ENCODE measurements at regions of chr5 and their contacts with region 1.

Region 1: DNA sequence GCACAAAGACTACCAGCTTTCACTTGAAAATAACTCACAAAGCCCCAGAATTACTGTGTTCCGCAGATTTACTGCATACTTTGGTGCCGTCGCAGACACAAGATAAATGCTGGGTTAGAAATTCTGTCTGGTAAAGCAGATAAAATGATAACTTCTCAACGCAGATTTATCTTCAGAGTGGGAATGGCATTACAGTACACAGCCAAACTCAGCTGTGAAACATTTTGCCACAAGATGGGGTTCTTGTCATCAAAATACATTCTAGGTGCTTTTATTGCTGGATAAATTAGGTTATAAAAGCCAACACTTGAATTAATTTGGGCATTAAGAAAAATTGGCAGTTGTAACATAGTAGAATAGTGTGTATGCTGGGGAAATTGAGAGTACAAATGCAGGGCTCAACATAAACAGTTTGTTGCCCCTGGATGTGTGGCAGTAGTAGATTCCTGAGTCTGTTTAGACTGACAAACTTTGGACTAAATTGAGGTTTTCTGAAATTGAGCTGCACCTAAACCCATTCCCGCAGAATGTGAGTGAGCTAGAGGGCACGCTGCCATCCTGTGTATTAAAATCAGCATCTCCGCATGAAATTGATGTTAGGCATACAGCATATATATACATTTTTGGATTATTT is 61.1 kb downstream of the LMNB1 start:
- DNase-seq: no peak
- H3K4me3 ChIP-seq: no peak overlapping the region
- H3K27ac ChIP-seq: no peak overlapping the region
- H3K4me1 ChIP-seq: no peaks in the 10 kb centered on the region
- H3K27me3 ChIP-seq: no peaks in the 10 kb centered on the region
- CTCF ChIP-seq: peak in 2 of 3 donors; percentile 18 to 20
- EP300 ChIP-seq: no peak
- POLR2A ChIP-seq: no peak

Region 2: DNA sequence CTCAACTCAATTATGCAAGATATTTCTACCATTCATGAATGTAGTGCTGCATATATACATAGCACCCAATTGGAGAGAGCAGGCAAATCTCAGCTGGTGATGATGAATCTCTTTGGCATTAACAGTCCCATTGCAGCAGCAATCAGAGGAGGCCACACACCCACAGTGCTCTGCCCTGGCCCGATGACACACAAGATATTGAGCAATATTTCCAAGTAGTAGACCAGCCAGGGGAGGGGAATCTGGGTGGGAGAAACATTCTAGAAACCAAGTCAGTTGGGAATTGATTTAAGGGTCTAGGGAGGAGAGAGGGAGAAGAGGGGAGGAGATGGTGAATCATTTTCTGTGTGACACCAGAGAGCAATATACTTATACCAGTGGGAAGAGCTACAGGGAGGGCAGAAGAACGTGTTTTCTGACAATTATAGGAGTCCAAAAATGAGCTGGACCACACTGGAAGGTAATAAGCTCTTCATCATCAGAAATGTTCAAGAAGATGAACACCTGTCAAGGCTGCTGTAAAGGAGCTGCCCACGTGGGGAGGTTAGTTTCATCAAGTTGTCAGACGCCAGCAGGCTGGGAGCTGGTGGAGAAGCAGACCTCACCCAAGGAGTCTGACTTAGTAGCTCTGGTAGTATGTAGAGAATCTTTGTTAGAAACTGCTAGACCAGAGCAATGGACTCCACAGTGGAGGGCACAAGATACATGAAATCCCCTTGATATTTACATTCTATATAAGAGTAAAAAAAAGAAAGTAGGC is 250.4 kb after region 1 on chr5:
- intact Hi-C with region 1: no loop called
- DNase-seq: no peak
- H3K4me3 ChIP-seq: no peak overlapping the region
- H3K27ac ChIP-seq: no peak overlapping the region
- H3K4me1 ChIP-seq: no peaks in the 10 kb centered on the region
- H3K27me3 ChIP-seq: no peaks in the 10 kb centered on the region
- CTCF ChIP-seq: no peak
- EP300 ChIP-seq: no peak
- POLR2A ChIP-seq: no peak

Region 3: DNA sequence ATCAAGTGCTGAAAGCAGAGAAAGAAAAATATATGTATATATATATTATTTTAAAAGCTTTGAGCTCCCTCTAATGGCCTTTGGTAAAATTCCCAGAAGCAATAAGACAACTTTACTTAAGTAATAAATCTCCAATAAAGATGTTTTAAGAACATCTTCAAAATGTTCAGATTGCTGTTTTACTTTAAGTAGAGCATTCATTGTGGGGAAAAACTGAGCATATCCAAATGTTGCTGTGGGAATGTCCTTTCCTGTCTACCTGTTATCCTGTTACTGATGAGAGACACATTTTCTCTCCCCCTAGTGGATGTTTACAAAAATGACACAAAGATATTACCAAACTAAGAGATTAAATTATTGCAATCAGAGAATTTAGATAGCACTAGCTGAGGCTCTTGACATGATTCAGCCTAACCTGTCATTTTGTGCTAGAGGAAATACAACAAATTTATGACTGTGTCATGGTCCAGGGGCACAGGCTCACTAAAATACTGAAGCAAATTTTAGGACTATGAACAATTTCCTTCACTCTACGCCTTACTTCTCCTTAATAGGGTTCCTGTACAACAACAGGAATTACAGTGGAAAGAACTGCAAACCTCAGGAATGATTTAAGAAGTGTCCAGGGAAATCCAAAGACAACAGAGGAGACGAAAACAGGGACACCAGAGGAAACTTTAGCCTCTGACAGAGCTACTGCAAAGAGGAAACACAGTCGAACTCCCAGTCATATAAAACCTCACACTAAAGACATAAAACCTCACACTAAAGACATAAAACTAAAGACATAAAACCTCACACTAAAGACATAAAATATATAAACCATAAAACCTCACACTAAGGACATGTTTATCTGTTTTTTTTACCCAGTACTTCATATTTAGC is 655.1 kb after region 1 on chr5:
- intact Hi-C with region 1: loop called in 2 of 4 experiments (anchors 5 to 10 kb)
- DNase-seq: no peak
- H3K4me3 ChIP-seq: no peak overlapping the region
- H3K27ac ChIP-seq: no peak overlapping the region
- H3K4me1 ChIP-seq: no peaks in the 10 kb centered on the region
- H3K27me3 ChIP-seq: no peaks in the 10 kb centered on the region
- CTCF ChIP-seq: peak in 2 of 3 donors; percentile 5 to 55
- EP300 ChIP-seq: no peak
- POLR2A ChIP-seq: no peak

Measured in ovary (tissue), 10 donors.